ENCODE measurements at regions of chr5 and their contacts with region 1.

Region 1: GRCh38 chr5:181159286-181159829 is 12.0 kb downstream of the OR2V2 start:
- DNase-seq: peak; percentile 61 to 74 (median 70)
- H3K4me3 ChIP-seq: no peak overlapping the region
- H3K4me3 Mint-ChIP-seq: peak overlapping the region in 1 of 2 donors; percentile 20
- H3K27ac ChIP-seq: no peak overlapping the region
- H3K27ac Mint-ChIP-seq: peak overlapping the region in 6 of 7 donors; percentile 31 to 89 (median 56)
- H3K4me1 ChIP-seq: peaks cover 10 to 11% of the 10 kb centered on the region in 2 donors
- H3K4me1 Mint-ChIP-seq: peaks cover 21% of the 10 kb centered on the region
- H3K27me3 ChIP-seq: peaks cover 1 to 15% of the 10 kb centered on the region in 2 donors
- H3K27me3 Mint-ChIP-seq: peaks cover 16 to 24% (median 24%) of the 10 kb centered on the region in 3 donors
- CTCF ChIP-seq: peak; percentile 91

Region 2: GRCh38 chr5:180784497-180785097 is 374.8 kb before region 1 on chr5:
- intact Hi-C with region 1: loop called in 1 of 2 experiments (anchors 10 kb)
- DNase-seq: peak; percentile 46 to 63 (median 59)
- H3K4me3 ChIP-seq: no peak overlapping the region
- H3K4me3 Mint-ChIP-seq: no peak overlapping the region
- H3K27ac ChIP-seq: no peak overlapping the region
- H3K27ac Mint-ChIP-seq: peak overlapping the region in 1 of 7 donors; percentile 57
- H3K4me1 ChIP-seq: no peaks in the 10 kb centered on the region
- H3K4me1 Mint-ChIP-seq: peaks cover 33% of the 10 kb centered on the region
- H3K27me3 ChIP-seq: no peaks in the 10 kb centered on the region
- H3K27me3 Mint-ChIP-seq: no peaks in the 10 kb centered on the region
- CTCF ChIP-seq: peak; percentile 56

Region 3: GRCh38 chr5:180809403-180810209 is 349.8 kb before region 1 on chr5:
- intact Hi-C with region 1: loop called in 1 of 2 experiments (anchors 10 kb)
- DNase-seq: peak; percentile 66 to 85 (median 80)
- H3K4me3 ChIP-seq: peak overlapping the region; percentile 52 to 98 (median 58)
- H3K4me3 Mint-ChIP-seq: peak overlapping the region; percentile 80 to 93
- H3K27ac ChIP-seq: peak overlapping the region; percentile 95 to 98
- H3K27ac Mint-ChIP-seq: peak overlapping the region; percentile 96 to 100 (median 99)
- H3K4me1 ChIP-seq: peaks cover 85 to 94% of the 10 kb centered on the region in 2 donors
- H3K4me1 Mint-ChIP-seq: peaks cover 82% of the 10 kb centered on the region
- H3K27me3 ChIP-seq: no peaks in the 10 kb centered on the region
- H3K27me3 Mint-ChIP-seq: peaks cover 0 to 2% (median 0%) of the 10 kb centered on the region in 3 donors
- CTCF ChIP-seq: no peak